Right ventricle myocardium superior (tissue), 1 donor: ENCODE measurements at regions of chr10 and their contacts with region 1.

Region 1: GRCh38 chr10:51607436-51607835 is 92.0 kb downstream of the CSTF2T start:
- DNase-seq: no peak
- ATAC-seq: no peak

Region 2: DNA sequence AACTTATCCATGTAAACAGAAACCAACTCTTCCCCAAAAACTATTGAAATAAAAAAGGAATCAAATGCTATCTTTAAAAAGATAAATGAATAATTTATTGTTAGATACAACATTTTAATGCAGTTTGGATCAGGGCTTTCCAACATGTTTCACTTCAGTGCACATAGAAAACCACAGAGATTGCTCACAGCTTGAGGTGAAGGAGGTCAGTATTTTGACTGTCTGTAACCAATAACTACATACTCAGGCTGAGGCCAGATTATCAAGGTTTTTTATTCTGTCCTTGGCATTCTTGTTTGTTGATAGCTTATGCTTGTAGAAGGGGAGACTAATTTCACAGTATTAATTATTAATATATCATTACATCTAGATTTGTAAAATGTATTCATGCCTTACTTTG is 337.6 kb before region 1 on chr10:
- intact Hi-C with region 1: loop called (anchors 5 kb)
- DNase-seq: no peak
- ATAC-seq: no peak

Region 3: GRCh38 chr10:51879238-51879637 is 271.8 kb after region 1 on chr10:
- intact Hi-C with region 1: no loop called
- DNase-seq: no peak
- ATAC-seq: peak; percentile 85